ENCODE measurements at regions of chr12 and their contacts with region 1.

Region 1: GRCh38 chr12:121128970-121129810 is 3.5 kb upstream of the P2RX7 start:
- DNase-seq: peak; percentile 75 to 89
- ATAC-seq: peak; percentile 80 to 90 (median 85)
- H3K4me3 ChIP-seq: peak overlapping the region; percentile 19
- H3K4me3 Mint-ChIP-seq: peak overlapping the region; percentile 92
- H3K27ac ChIP-seq: peak overlapping the region; percentile 91
- H3K27ac Mint-ChIP-seq: peak overlapping the region; percentile 97 to 98
- H3K4me1 ChIP-seq: peaks cover 47% of the 10 kb centered on the region
- H3K4me1 Mint-ChIP-seq: peaks cover 66 to 69% of the 10 kb centered on the region in 2 donors
- H3K27me3 ChIP-seq: no peaks in the 10 kb centered on the region
- H3K27me3 Mint-ChIP-seq: no peaks in the 10 kb centered on the region
- CTCF ChIP-seq: no peak

Region 2: GRCh38 chr12:120961604-120962531 is 167.3 kb before region 1 on chr12:
- intact Hi-C with region 1: no loop called
- DNase-seq: no peak
- ATAC-seq: no peak
- H3K4me3 ChIP-seq: no peak overlapping the region
- H3K4me3 Mint-ChIP-seq: no peak overlapping the region
- H3K27ac ChIP-seq: no peak overlapping the region
- H3K27ac Mint-ChIP-seq: no peak overlapping the region
- H3K4me1 ChIP-seq: peaks cover 12% of the 10 kb centered on the region
- H3K4me1 Mint-ChIP-seq: no peaks in the 10 kb centered on the region
- H3K27me3 ChIP-seq: no peaks in the 10 kb centered on the region
- H3K27me3 Mint-ChIP-seq: no peaks in the 10 kb centered on the region
- CTCF ChIP-seq: no peak

Region 3: GRCh38 chr12:121015825-121016766 is 113.1 kb before region 1 on chr12 and contains the start of gene C12orf43:
- intact Hi-C with region 1: no loop called
- DNase-seq: peak; percentile 87 to 96
- ATAC-seq: peak; percentile 97 to 99 (median 98)
- H3K4me3 ChIP-seq: peak within 1 kb of the TSS; percentile 56
- H3K4me3 Mint-ChIP-seq: peak within 1 kb of the TSS; percentile 100
- H3K27ac ChIP-seq: peak within 1 kb of the TSS; percentile 71
- H3K27ac Mint-ChIP-seq: peak within 1 kb of the TSS; percentile 94 to 99
- H3K4me1 ChIP-seq: peaks cover 9% of the 10 kb centered on the region
- H3K4me1 Mint-ChIP-seq: peaks cover 10 to 19% of the 10 kb centered on the region in 2 donors
- H3K27me3 ChIP-seq: no peaks in the 10 kb centered on the region
- H3K27me3 Mint-ChIP-seq: no peaks in the 10 kb centered on the region
- CTCF ChIP-seq: no peak
- total RNA-seq, gene C12orf43: 16.0 to 19.9 (median 18.0) TPM

Region 4: GRCh38 chr12:121223292-121224285 is 94.4 kb after region 1 on chr12:
- intact Hi-C with region 1: loop called (anchors 5 kb)
- DNase-seq: peak in 1 of 2 donors; percentile 69
- ATAC-seq: peak; percentile 67 to 78 (median 74)
- H3K4me3 ChIP-seq: no peak overlapping the region
- H3K4me3 Mint-ChIP-seq: peak overlapping the region; percentile 49
- H3K27ac ChIP-seq: peak overlapping the region; percentile 61
- H3K27ac Mint-ChIP-seq: peak overlapping the region; percentile 54 to 65
- H3K4me1 ChIP-seq: peaks cover 36% of the 10 kb centered on the region
- H3K4me1 Mint-ChIP-seq: peaks cover 18 to 28% of the 10 kb centered on the region in 2 donors
- H3K27me3 ChIP-seq: no peaks in the 10 kb centered on the region
- H3K27me3 Mint-ChIP-seq: no peaks in the 10 kb centered on the region
- CTCF ChIP-seq: no peak